Activated CD4-positive, alpha-beta T cell treated with anti-CD3 and anti-CD28 coated beads, Interleukin-2, amount 10 ng/mL, durations not matched to agents 7 days and 5 days (primary cell): ENCODE measurements at regions of chr11 and their contacts with region 1.

Region 1: DNA sequence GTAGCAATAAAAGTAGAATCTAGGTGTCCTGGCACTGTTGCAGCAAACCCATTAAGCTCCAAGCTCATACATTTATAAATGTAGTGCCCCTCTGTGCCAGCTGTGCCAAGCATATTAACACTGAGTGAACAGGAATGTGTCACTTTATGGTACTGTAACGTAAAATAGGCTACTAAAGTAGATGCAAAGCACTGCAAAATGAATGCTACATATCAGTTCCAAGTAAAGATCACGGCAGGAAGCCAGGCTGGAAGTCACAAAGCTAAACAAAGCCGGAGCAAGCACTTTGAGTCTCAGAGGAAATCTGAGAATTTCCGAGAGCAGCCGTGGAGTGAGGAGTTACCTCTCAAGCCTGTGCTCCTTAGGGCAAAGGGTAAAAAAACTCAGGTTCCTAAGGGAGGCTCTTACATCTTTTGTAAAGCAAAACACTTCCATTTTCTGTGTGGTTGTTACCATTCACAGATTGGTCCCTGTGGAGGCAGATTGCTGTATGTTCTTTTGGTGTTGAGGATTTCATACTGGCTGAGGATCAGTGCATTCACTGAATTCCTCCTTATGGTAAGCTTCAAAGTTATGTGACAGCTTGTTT is 85.7 kb downstream of the WNT11 start:
- DNase-seq: no peak
- H3K4me3 Mint-ChIP-seq: no peak overlapping the region
- H3K27ac Mint-ChIP-seq: no peak overlapping the region
- H3K4me1 Mint-ChIP-seq: no peaks in the 10 kb centered on the region
- H3K27me3 Mint-ChIP-seq: no peaks in the 10 kb centered on the region

Region 2: GRCh38 chr11:76131671-76132631 is 11.3 kb after region 1 on chr11:
- CTCF ChIA-PET with region 1: interaction called, 10 read pairs
- POLR2A ChIA-PET with region 1: no interaction called
- DNase-seq: no peak
- H3K4me3 Mint-ChIP-seq: no peak overlapping the region
- H3K27ac Mint-ChIP-seq: peak overlapping the region; percentile 37
- H3K4me1 Mint-ChIP-seq: peaks cover 22% of the 10 kb centered on the region
- H3K27me3 Mint-ChIP-seq: no peaks in the 10 kb centered on the region